Heart left ventricle (tissue), 16 donors: ENCODE measurements at regions of chr1 and their contacts with region 1.

Region 1: DNA sequence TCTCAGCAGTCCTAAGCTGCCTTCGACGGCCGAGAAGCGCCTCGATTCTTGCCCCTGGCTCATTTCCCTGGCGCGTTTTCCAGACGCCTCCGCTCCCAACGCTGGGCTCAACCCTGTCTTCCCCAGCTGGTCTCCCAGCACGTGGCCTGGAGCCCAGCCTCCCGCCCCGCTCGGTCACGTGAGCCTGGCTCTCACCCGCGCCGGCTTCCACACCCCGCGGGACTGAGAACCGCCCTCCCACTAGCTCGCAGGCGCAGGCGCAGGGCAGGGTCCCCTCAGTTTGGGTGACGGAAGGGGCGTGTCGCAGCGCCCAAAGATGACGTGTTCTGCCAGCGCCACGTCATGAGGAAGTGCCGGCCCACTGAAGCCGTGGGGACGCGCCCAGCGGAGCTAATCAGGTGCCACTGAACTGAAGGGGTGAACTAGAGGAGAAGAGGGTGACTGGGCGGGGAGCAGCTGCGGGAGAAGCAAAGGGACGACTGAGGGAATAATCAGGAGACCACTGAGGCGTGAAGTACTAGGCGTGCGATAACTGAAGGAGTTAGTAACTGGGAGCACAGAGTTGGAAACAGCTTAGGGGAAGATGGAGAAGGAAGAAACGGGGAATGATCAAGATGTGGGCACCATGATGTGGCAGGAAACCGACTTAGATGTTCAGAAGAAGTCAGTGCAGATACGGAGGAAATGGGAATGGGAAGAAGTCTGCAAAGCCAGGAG is at the start of gene DHDDS:
- DNase-seq: peak; percentile 98 to 99 (median 99)
- ATAC-seq: peak; percentile 99 to 100 (median 100)
- H3K4me3 ChIP-seq: peak within 1 kb of the TSS; percentile 50 to 84 (median 70)
- H3K27ac ChIP-seq: peak within 1 kb of the TSS in 11 of 12 donors; percentile 66 to 84 (median 77)
- H3K4me1 ChIP-seq: peaks cover 0 to 29% (median 20%) of the 10 kb centered on the region in 12 donors
- H3K27me3 ChIP-seq: no peaks in the 10 kb centered on the region
- CTCF ChIP-seq: no peak
- POLR2A ChIP-seq: peak in 1 of 2 donors; percentile 81
- total RNA-seq, gene DHDDS: 14.1 to 45.0 (median 29.9) TPM

Region 2: GRCh38 chr1:26363549-26364448 is 68.3 kb before region 1 on chr1:
- intact Hi-C with region 1: no loop called
- DNase-seq: peak; percentile 70 to 89 (median 78)
- ATAC-seq: peak; percentile 50 to 80 (median 71)
- H3K4me3 ChIP-seq: no peak overlapping the region
- H3K27ac ChIP-seq: no peak overlapping the region
- H3K4me1 ChIP-seq: peaks cover 0 to 19% (median 8%) of the 10 kb centered on the region in 12 donors
- H3K27me3 ChIP-seq: peaks cover 17 to 57% (median 28%) of the 10 kb centered on the region in 9 donors
- CTCF ChIP-seq: peak; percentile 65 to 94 (median 86)
- POLR2A ChIP-seq: no peak

Region 3: GRCh38 chr1:26472901-26473845 is 41.0 kb after region 1 on chr1:
- intact Hi-C with region 1: loop called in 3 of 10 experiments (anchors 2 to 5 kb)
- DNase-seq: peak; percentile 96 to 99 (median 97)
- ATAC-seq: peak; percentile 84 to 89 (median 85)
- H3K4me3 ChIP-seq: peak overlapping the region; percentile 61 to 100 (median 92)
- H3K27ac ChIP-seq: peak overlapping the region; percentile 92 to 100 (median 100)
- H3K4me1 ChIP-seq: peaks cover 0 to 41% (median 33%) of the 10 kb centered on the region in 12 donors
- H3K27me3 ChIP-seq: no peaks in the 10 kb centered on the region
- CTCF ChIP-seq: no peak
- POLR2A ChIP-seq: peak in 1 of 2 donors; percentile 43